ENCODE measurements at regions of chr2 and their contacts with region 1.

Region 1: GRCh38 chr2:16625201-16625729 is 40.4 kb downstream of the CYRIA start:
- DNase-seq: peak; percentile 92 to 96 (median 94)
- H3K4me3 ChIP-seq: peak overlapping the region in 1 of 3 experiments; percentile 53
- H3K4me3 Mint-ChIP-seq: peak overlapping the region; percentile 71 to 76
- H3K27ac ChIP-seq: peak overlapping the region; percentile 91 to 98
- H3K27ac Mint-ChIP-seq: peak overlapping the region; percentile 98 to 100 (median 99)
- H3K4me1 ChIP-seq: peaks cover 98 to 99% of the 10 kb centered on the region in 2 donors
- H3K4me1 Mint-ChIP-seq: peaks cover 98% of the 10 kb centered on the region
- H3K27me3 ChIP-seq: no peaks in the 10 kb centered on the region
- H3K27me3 Mint-ChIP-seq: peaks cover 0 to 5% (median 0%) of the 10 kb centered on the region in 3 donors
- CTCF ChIP-seq: no peak

Region 2: DNA sequence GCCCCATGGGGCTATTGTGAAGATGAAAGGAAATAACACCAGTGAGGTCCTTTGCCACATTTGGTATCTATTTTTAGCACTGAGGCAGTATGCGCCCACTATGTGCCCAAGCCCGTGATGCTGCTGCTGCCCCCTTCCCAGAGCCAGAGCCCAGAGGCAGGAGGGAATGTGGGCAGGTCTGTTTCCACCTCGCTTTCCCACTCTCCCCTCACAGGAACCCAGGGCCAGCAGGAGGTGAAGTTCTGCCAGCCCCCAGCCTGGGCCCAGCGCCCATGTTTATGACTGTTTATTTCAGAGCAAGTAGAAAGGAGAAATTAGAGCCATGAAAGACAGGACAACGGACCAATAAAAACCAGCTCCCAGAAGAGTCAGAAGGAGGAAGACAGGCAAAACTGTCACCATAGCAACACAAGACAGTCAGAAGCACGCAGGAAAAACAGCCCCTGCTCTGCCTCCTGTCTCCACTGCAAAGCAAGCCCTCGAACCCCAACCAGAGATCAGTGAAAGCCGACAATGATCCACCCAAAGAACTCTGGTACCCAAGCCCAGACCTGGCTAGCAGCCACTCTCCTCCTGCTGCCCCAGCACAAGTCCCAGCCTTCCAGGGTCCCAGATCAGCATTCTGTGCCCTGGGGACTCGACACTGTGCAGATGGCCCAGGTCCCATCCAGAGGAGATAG is 38.9 kb after region 1 on chr2:
- intact Hi-C with region 1: loop called (anchors 5 kb)
- DNase-seq: peak; percentile 87 to 95 (median 94)
- H3K4me3 ChIP-seq: peak overlapping the region; percentile 70 to 89 (median 84)
- H3K4me3 Mint-ChIP-seq: peak overlapping the region; percentile 98 to 99
- H3K27ac ChIP-seq: peak overlapping the region; percentile 90
- H3K27ac Mint-ChIP-seq: peak overlapping the region; percentile 95 to 99 (median 97)
- H3K4me1 ChIP-seq: peaks cover 54 to 66% of the 10 kb centered on the region in 2 donors
- H3K4me1 Mint-ChIP-seq: peaks cover 65% of the 10 kb centered on the region
- H3K27me3 ChIP-seq: no peaks in the 10 kb centered on the region
- H3K27me3 Mint-ChIP-seq: peaks cover 5 to 9% (median 6%) of the 10 kb centered on the region in 3 donors
- CTCF ChIP-seq: no peak

Region 3: GRCh38 chr2:16861530-16862196 is 236.4 kb after region 1 on chr2:
- intact Hi-C with region 1: loop called in 1 of 2 experiments (anchors 5 kb)
- DNase-seq: peak; percentile 80 to 98 (median 94)
- H3K4me3 ChIP-seq: no peak overlapping the region
- H3K4me3 Mint-ChIP-seq: peak overlapping the region in 1 of 2 donors; percentile 67
- H3K27ac ChIP-seq: peak overlapping the region; percentile 75 to 88
- H3K27ac Mint-ChIP-seq: peak overlapping the region; percentile 94 to 99 (median 98)
- H3K4me1 ChIP-seq: peaks cover 22 to 23% of the 10 kb centered on the region in 2 donors
- H3K4me1 Mint-ChIP-seq: peaks cover 27% of the 10 kb centered on the region
- H3K27me3 ChIP-seq: no peaks in the 10 kb centered on the region
- H3K27me3 Mint-ChIP-seq: peaks cover 0 to 3% (median 0%) of the 10 kb centered on the region in 3 donors
- CTCF ChIP-seq: no peak

Measured in CD14-positive monocyte (primary cell).